A673 (cell line): ENCODE measurements at regions of chr6 and their contacts with region 1.

Region 1: DNA sequence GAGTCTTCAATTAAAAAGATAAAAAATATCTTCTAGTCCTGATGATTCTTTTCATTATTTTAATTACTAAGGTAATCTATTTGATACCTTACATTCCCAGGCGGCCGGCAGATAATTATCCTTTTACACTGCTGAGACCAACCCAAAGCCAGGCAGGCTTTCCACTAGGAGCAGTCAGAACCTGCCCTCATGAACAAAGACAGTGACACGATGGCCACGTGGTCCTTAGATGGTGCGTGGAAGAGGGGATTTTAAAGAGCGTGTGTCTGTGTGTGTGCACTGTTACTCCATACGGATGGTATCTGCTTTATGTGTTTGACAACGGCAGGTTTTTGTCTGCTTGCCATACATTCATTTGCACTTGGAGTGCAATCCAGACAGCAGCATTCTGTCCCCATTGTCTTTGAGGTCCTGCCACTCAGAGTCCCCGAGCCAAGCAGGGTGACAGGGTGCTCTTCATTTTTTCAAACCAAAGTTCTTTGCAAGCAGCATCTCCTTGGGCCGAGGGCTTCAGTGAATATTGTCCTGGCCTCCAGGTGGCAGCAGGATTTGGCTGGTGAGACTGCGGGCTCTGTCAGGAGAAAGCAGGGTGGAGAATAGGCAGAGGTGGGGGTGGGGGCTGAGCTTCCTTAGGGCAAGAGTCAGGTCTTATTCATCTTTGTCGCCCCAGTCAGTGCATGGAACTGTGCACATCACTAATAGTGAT is 260.5 kb downstream of the NRN1 start:
- DNase-seq: peak; percentile 45
- H3K4me3 ChIP-seq: no peak overlapping the region
- H3K27ac ChIP-seq: no peak overlapping the region
- H3K4me1 ChIP-seq: peaks cover 19% of the 10 kb centered on the region
- H3K27me3 ChIP-seq: no peaks in the 10 kb centered on the region
- CTCF ChIP-seq: peak; percentile 60

Region 2: DNA sequence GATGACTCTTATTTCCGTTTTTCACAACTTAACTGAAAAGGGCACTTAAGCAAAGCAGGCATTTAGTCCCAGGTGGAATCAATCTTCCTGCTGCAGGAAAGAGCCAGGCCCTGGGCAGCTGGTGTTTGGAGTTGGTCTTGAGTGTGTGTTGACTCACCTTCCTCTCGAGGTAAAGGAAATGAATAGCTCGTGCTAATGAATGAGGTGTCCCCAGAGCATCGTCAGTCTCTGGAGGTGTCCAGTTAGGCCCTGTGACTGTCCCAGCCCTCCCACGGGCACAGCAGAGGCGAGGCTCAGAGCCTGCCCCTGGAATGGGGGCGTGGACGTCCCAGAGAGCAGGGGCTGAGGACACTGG is 17.1 kb before region 1 on chr6:
- CTCF ChIA-PET with region 1: no interaction called
- POLR2A ChIA-PET with region 1: no interaction called
- intact Hi-C with region 1: no loop called
- DNase-seq: no peak
- H3K4me3 ChIP-seq: no peak overlapping the region
- H3K27ac ChIP-seq: no peak overlapping the region
- H3K4me1 ChIP-seq: peaks cover 34% of the 10 kb centered on the region
- H3K27me3 ChIP-seq: no peaks in the 10 kb centered on the region
- CTCF ChIP-seq: no peak

Region 3: DNA sequence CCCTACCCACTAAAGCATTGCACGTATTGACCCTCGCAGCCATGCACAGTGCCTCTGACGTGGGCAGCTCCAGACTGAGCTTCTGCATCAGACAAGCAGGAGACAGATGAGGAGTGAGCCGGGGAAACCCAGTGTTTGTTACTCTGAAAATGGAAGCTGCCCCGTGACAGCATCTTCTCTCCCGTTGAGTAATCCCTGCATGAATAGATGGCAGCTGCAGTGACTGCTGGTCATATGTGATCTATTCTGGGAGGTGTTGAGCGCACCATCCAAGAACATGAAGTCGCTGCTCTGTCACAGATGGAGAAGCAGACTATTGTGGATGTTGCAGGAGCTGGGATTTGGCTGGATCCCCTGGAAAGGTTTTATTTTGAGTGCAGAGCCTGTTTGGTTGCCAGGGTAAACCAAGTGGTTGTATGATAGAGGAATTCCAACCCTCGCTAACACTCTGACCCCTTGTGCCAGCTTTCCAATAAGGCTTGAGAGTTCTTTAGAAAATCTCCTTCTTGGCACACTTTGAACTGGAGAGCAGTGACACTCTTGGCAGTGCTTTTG is 18.3 kb after region 1 on chr6:
- CTCF ChIA-PET with region 1: no interaction called
- POLR2A ChIA-PET with region 1: interaction called, 11 read pairs
- intact Hi-C with region 1: no loop called
- DNase-seq: no peak
- H3K4me3 ChIP-seq: no peak overlapping the region
- H3K27ac ChIP-seq: no peak overlapping the region
- H3K4me1 ChIP-seq: peaks cover 13% of the 10 kb centered on the region
- H3K27me3 ChIP-seq: no peaks in the 10 kb centered on the region
- CTCF ChIP-seq: no peak